Heart left ventricle (tissue), 16 donors: ENCODE measurements at regions of chr2 and their contacts with region 1.

Region 1: GRCh38 chr2:120703330-120703994 is 32.2 kb upstream of the GLI2 start:
- DNase-seq: no peak
- ATAC-seq: peak in 1 of 4 donors; percentile 54
- H3K4me3 ChIP-seq: no peak overlapping the region
- H3K27ac ChIP-seq: no peak overlapping the region
- H3K4me1 ChIP-seq: no peaks in the 10 kb centered on the region
- H3K27me3 ChIP-seq: peaks cover 0 to 15% (median 0%) of the 10 kb centered on the region in 9 donors
- CTCF ChIP-seq: no peak
- POLR2A ChIP-seq: no peak

Region 2: GRCh38 chr2:120867290-120868241 is 164.1 kb after region 1 on chr2:
- intact Hi-C with region 1: no loop called
- DNase-seq: peak; percentile 72 to 86 (median 84)
- ATAC-seq: peak; percentile 56 to 90 (median 83)
- H3K4me3 ChIP-seq: peak overlapping the region; percentile 0 to 54 (median 44)
- H3K27ac ChIP-seq: peak overlapping the region; percentile 6 to 87 (median 74)
- H3K4me1 ChIP-seq: peaks cover 0 to 30% (median 6%) of the 10 kb centered on the region in 12 donors
- H3K27me3 ChIP-seq: peaks cover 0 to 9% (median 0%) of the 10 kb centered on the region in 9 donors
- CTCF ChIP-seq: no peak
- POLR2A ChIP-seq: no peak

Region 3: GRCh38 chr2:121136323-121136722 is 432.9 kb after region 1 on chr2:
- intact Hi-C with region 1: no loop called
- DNase-seq: no peak
- ATAC-seq: no peak
- H3K4me3 ChIP-seq: no peak overlapping the region
- H3K27ac ChIP-seq: no peak overlapping the region
- H3K4me1 ChIP-seq: no peaks in the 10 kb centered on the region
- H3K27me3 ChIP-seq: peaks cover 0 to 9% (median 0%) of the 10 kb centered on the region in 9 donors
- CTCF ChIP-seq: no peak
- POLR2A ChIP-seq: no peak

Region 4: DNA sequence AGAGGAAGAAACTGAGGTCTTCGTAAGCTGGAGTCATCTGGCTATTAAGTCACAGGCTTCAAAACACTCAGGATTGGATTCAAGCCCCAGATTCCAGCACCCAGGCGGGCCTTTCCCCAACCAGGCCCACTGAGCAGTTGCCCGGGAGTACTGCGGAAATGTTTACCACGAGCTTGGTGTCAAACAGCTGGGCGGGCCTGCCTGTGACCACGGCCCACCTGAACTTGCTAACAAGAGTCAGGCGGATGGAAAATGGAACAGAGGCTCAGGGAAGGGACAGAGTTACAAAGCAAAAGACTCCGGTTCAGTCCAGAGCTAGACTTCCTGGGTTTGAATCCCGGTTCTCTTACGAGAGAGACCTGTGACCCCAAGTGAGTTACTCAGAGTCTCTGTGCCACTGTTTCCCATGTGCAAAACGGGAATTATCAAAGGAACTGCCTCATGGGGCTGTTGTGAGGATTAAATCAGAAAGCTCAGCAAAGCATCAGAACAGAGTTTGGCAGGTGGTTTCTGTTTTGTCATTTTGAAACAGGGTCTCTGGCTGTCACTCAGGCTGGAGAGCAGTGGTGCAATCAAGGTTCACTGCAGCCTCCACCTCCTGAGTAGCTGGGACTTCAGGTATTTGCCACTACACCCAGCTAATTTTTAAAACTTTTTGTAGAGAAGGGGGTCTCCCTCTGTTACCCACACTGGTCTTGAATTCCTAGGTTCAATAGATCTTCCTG is 630.5 kb after region 1 on chr2:
- intact Hi-C with region 1: loop called in 1 of 10 experiments (anchors 10 kb)
- DNase-seq: no peak
- ATAC-seq: no peak
- H3K4me3 ChIP-seq: no peak overlapping the region
- H3K27ac ChIP-seq: no peak overlapping the region
- H3K4me1 ChIP-seq: peaks cover 0 to 10% (median 0%) of the 10 kb centered on the region in 12 donors
- H3K27me3 ChIP-seq: no peaks in the 10 kb centered on the region
- CTCF ChIP-seq: no peak
- POLR2A ChIP-seq: no peak